ENCODE measurements at regions of chr12 and their contacts with region 1.

Region 1: DNA sequence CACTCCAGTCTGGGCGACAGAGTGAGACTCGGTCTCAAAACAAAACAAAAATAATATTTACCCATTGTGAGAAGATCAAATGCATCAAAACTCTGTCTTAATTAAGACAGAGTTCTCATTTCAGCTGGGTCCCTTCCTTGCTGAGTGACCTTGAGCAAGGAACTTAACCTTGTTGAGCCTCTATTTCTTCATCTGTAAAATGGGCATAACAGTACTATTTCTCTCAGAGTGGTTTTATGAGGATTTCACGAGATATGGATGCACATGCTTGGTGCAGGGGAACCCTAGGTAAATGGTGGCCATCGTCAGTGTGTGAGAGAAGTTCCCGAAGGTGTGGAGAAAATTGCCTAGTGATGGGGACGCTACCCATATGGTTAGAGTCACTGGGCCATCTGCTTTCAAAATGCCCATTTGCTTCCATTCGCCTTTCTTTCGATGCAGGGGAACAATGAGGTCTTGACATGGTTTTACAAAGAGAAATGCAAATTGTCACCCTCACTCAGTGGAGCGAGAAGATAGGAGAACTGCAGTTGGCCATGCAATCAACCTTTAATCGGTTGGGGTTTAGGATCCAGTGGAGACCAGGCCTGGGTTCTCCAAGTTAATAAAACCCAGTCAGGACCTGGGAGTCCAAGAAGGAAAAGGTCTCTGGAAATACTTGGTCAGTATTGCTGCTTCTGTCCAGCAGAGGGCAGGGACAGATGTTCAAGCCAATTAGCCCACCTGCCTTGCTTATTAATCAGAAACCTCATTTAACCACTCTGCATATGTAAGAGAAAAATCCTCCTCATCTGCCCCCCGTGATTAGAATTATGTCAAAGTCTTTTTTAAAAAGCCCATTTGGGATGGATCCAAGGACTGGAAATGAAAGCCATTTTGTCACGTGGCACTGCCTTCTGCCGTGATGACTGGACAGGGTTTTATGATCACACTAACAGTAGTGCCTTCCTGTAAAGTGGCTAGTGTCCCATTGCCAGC is 37.2 kb downstream of the CFAP251 start:
- DNase-seq: no peak
- ATAC-seq: peak; percentile 54; the same call in 2 of the 3 replicates
- H3K4me3 ChIP-seq: no peak overlapping the region
- H3K27ac ChIP-seq: no peak overlapping the region
- H3K4me1 ChIP-seq: peaks cover 17% of the 10 kb centered on the region
- H3K27me3 ChIP-seq: no peaks in the 10 kb centered on the region
- CTCF ChIP-seq: peak; percentile 40
- EP300 ChIP-seq: no peak
- POLR2A ChIP-seq: no peak
- RAD21 ChIP-seq: 0 out of 2 replicates have a peak, but pooled peaks have one; percentile 21

Region 2: DNA sequence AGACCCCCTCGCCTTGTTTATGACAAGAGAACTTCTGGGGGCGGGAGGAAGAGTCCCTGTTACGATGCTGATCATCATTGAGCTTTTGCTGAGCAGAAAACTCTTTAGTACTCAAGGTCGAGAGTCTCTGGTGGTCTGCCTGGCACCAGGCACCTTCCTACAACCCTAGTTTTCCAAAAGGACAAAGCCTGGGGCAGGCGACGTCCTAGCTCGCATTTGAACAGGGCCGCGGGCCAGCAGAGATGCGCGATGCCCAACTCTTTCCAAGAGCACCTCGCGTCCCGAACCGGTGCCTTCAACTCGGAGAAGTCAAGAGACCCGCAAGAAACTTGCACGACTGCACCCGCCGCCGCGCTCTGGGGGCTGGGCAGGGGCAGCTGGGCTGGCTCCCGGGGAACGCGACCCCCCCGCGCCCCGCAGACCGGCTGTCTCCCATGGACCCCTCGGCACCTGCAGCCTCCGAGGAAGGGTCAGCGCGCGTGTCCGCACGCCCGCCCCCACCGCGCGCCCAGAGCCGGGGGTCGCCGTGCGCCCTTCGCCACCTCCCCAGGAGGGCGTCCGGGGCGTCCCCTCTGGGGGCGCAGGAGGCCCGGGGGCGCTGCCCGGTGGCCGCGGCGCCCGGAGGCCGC is 65.8 kb after region 1 on chr12:
- CTCF ChIA-PET with region 1: no interaction called
- POLR2A ChIA-PET with region 1: no interaction called
- in situ Hi-C with region 1: no loop called
- intact Hi-C with region 1: no loop called
- DNase-seq: no peak
- ATAC-seq: no peak
- H3K4me3 ChIP-seq: peak overlapping the region; percentile 64 to 74 (median 70)
- H3K27ac ChIP-seq: no peak overlapping the region
- H3K4me1 ChIP-seq: peaks cover 36% of the 10 kb centered on the region
- H3K27me3 ChIP-seq: peaks cover 0 to 20% of the 10 kb centered on the region in 2 experiments; a peak in 2 of 5 replicates
- CTCF ChIP-seq: no peak
- EP300 ChIP-seq: no peak
- POLR2A ChIP-seq: no peak
- RAD21 ChIP-seq: no peak

Region 3: DNA sequence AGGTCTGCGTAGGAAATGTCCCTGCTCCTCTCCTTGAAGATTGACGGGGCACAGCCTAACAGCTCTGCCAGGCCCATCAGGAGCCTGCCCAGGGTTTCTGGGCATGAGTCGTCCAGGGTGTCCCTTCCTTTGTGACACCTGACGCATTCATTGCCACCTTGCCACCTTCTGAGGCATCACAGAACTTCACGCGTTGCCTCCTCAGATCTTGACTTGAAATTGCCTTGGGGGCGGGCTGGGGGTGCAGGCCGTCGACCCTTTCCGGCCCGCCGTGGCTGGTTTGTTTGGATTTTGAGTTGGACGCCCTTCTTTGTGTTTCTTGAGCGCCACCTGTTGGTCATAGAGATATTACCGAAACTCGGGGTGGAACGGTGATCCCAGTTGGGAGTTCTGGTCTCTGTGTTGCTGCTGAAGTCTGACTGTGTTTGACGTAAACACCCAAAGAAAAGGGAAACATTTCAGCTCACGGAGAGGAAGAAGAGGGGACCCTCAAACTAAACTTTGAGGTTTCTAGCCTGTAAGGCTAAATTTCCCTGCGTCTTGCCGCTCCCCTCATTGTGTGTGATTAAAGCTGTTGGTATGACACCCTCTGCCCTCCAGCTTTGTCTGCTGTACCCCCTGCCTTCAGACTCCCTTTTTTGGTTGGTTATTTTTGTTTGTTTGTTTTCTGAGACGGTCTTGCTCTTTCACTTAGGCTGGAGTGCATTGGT is 167.7 kb after region 1 on chr12:
- CTCF ChIA-PET with region 1: no interaction called
- POLR2A ChIA-PET with region 1: no interaction called
- in situ Hi-C with region 1: no loop called
- intact Hi-C with region 1: loop called (anchors 10 kb)
- DNase-seq: peak; percentile 63
- ATAC-seq: peak; percentile 48
- H3K4me3 ChIP-seq: peak overlapping the region in 1 of 3 experiments; percentile 44; a peak in 1 of 6 replicates
- H3K27ac ChIP-seq: no peak overlapping the region
- H3K4me1 ChIP-seq: peaks cover 38% of the 10 kb centered on the region
- H3K27me3 ChIP-seq: no peaks in the 10 kb centered on the region
- CTCF ChIP-seq: peak; percentile 87
- EP300 ChIP-seq: no peak
- POLR2A ChIP-seq: no peak
- RAD21 ChIP-seq: peak; percentile 79

Measured in HepG2 (cell line).